Left cardiac atrium (tissue), 4 donors: ENCODE measurements at regions of chr3 and their contacts with region 1.

Region 1: GRCh38 chr3:113211330-113212149 is at the start of gene BOC:
- DNase-seq: peak; percentile 43
- ATAC-seq: peak; percentile 81 to 92
- total RNA-seq, gene BOC: 14.5 to 16.3 TPM

Region 2: DNA sequence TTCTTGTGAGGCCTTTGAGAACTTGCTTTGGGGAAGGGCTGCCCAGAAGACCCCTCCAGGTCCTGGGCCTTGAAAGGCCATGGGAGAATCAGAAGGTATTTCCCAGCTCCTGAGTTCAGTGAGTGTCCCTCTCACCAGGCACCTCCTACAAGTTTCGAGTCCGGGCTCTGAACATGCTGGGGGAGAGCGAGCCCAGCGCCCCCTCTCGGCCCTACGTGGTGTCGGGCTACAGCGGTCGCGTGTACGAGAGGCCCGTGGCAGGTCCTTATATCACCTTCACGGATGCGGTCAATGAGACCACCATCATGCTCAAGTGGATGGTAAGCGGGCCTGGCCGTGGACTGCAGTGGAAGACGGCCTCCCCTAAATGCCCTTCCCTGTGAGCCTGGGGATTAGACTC is 68.1 kb after region 1 on chr3:
- intact Hi-C with region 1: loop called in 1 of 2 experiments (anchors 5 kb)
- DNase-seq: no peak
- ATAC-seq: no peak

Region 3: DNA sequence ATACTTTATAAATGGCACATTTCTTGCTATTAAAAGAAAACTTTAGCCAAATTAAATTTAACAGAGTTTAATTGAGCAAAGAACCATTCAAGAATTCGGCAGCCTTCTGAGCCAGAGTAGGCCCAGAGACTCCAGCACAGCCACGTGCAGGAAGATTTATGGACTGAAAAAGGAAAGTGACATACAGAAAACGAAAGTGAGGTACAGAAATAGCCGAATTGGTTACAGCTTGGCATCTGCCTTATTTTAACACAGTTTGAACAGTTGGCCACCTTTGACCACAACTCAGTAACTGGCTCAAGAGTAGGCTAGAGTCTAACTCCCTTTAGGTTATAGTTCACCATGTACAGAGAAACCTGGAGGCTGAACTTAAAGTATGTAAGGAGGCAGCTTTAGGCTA is 212.2 kb after region 1 on chr3:
- intact Hi-C with region 1: no loop called
- DNase-seq: no peak
- ATAC-seq: no peak

Region 4: GRCh38 chr3:114179575-114179974 is 968.0 kb after region 1 on chr3:
- intact Hi-C with region 1: no loop called
- DNase-seq: no peak
- ATAC-seq: no peak